ENCODE measurements at regions of chr13 and their contacts with region 1.

Region 1: GRCh38 chr13:39263033-39263432 is 224.8 kb downstream of the NHLRC3 start:
- DNase-seq: no peak
- ATAC-seq: peak; percentile 78

Region 2: DNA sequence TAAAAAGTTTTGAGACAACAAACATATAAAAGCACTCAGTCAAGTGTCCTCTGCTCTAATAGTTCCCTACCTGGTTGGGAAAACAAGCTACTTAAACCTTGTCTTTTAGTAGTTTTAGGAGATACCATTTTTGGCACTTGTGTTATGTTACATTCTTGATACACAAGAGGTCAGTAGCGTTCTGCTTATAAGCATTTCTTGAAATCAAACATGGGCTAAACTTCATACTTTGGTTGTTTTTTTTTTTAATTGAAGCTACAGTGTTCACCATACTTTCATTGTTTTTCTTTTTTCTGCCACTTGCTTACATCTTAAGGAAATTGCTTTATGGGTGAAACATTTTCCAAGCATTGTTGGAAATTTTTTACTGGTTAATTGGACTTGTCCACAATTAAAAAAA is 211.9 kb before region 1 on chr13:
- intact Hi-C with region 1: loop called (anchors 10 kb)
- DNase-seq: no peak
- ATAC-seq: no peak

Region 3: DNA sequence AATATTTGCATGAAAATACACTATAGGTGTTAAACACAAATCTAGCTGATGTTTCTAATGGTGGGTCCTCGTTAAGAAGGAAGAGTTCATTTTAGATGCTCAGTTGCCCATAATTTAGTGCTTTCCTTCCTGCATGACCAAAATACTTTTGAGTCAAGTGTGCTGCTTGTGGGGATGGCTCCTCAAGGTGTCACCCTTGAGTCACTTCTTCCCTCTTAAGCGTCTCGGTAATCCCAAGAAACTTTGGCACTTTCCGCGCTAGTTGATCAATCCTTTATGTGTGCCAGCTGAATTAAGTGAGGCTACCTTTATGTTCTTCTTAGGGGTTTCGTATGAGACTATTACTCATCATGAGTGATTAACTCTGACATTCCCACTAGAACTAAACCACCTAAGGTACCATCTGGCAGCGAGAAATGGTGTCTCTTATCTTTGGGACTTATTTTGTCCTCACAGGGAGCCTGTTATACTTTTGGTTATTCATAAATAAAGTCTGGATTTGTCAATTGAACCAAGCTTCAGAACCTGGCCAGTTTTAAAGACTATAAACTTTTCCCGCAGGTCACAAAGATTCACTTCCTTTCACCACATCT is 118.0 kb before region 1 on chr13:
- intact Hi-C with region 1: loop called (anchors 5 kb)
- DNase-seq: peak; percentile 42
- ATAC-seq: peak; percentile 82

Region 4: GRCh38 chr13:39468306-39468705 is 205.3 kb after region 1 on chr13:
- intact Hi-C with region 1: no loop called
- DNase-seq: no peak
- ATAC-seq: no peak

Measured in left ventricle myocardium superior (tissue), 1 donor.